Left cardiac atrium (tissue), 4 donors: ENCODE measurements at regions of chr17 and their contacts with region 1.

Region 1: DNA sequence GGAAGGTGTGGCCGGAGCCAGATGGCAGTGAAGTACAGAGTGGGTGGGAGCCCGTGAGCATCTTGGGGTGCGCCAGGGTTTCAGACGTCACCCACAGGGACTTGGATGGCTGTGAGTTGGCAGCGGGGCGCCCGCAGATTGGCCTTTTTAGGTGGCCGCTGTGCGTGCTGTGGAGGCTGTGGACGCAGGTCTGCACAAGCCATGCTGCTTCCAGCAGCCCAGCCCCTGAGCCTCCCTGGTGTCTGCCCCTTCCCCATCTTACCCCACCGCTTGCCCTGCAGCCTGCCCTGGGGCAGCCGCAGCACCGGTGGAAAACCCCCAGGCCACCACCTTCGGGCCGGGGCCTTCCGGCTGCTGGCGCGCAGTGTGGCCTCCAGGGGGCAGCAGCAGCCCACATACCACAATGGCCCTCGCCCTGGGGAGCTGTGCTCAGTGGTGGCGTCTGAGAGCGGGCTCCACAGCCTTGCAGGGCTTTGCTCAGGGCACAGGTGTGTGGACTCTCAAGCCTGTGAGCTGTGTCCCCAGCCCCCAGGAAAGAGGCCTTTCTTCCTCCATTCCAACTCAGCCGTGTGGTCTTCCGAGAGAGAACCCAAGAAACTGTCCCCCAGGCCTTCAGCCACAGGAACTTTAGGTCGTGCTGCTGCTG is 11.8 kb downstream of the ENDOV start:
- DNase-seq: peak; percentile 70
- ATAC-seq: peak; percentile 81 to 87

Region 2: GRCh38 chr17:79728226-79728907 is 698.4 kb before region 1 on chr17:
- intact Hi-C with region 1: no loop called
- DNase-seq: peak; percentile 82
- ATAC-seq: peak; percentile 86 to 94

Region 3: GRCh38 chr17:80575057-80575875 is 148.5 kb after region 1 on chr17:
- intact Hi-C with region 1: loop called (anchors 5 to 10 kb)
- DNase-seq: peak; percentile 85
- ATAC-seq: peak; percentile 86 to 91

Region 4: DNA sequence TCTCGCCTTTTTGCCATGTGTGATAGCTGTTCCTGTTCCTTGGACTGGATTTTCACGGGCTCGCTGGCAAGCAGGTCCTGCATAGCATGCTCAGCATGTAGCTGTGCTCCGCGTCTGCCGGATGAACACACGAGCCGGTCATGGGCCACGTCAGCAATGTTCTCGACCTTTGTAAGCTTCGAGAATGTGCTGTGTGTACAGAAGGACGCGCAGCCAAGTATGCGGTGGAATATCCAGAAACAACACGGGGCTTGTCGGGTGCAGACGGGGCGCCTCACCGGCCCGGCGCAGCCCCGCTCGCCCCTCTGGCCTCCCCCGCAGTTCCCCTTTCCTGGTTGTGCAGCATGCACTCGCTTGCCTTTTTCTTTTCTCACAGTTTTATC is 160.0 kb after region 1 on chr17:
- intact Hi-C with region 1: no loop called
- DNase-seq: no peak
- ATAC-seq: no peak

Region 5: GRCh38 chr17:80981062-80981902 is 554.5 kb after region 1 on chr17:
- intact Hi-C with region 1: loop called (anchors 1 to 5 kb)
- DNase-seq: no peak
- ATAC-seq: peak; percentile 37 to 43

Region 6: GRCh38 chr17:81094509-81095382 is 667.9 kb after region 1 on chr17:
- intact Hi-C with region 1: loop called in 1 of 2 experiments (anchors 10 kb)
- DNase-seq: peak; percentile 63
- ATAC-seq: peak; percentile 19 to 63